ENCODE measurements at regions of chr2 and their contacts with region 1.

Region 1: GRCh38 chr2:231482806-231483391 is 18.6 kb upstream of the NCL start:
- DNase-seq: peak; percentile 62 to 94 (median 81)
- ATAC-seq: peak; percentile 97 to 99 (median 98)
- H3K4me3 ChIP-seq: peak overlapping the region in 3 of 4 donors; percentile 26 to 52 (median 45)
- H3K27ac ChIP-seq: peak overlapping the region; percentile 22 to 60 (median 34)
- H3K4me1 ChIP-seq: peaks cover 0 to 2% (median 0%) of the 10 kb centered on the region in 3 donors
- H3K27me3 ChIP-seq: no peaks in the 10 kb centered on the region
- CTCF ChIP-seq: peak; percentile 79 to 93 (median 87)

Region 2: GRCh38 chr2:231557571-231558237 is 74.8 kb after region 1 on chr2:
- intact Hi-C with region 1: loop called in 2 of 3 experiments (anchors 5 kb)
- DNase-seq: peak in 5 of 6 donors; percentile 47 to 63 (median 53)
- ATAC-seq: peak; percentile 90 to 97 (median 95)
- H3K4me3 ChIP-seq: no peak overlapping the region
- H3K27ac ChIP-seq: no peak overlapping the region
- H3K4me1 ChIP-seq: no peaks in the 10 kb centered on the region
- H3K27me3 ChIP-seq: no peaks in the 10 kb centered on the region
- CTCF ChIP-seq: peak; percentile 34 to 52 (median 50)